ENCODE measurements at regions of chr6 and their contacts with region 1.

Region 1: DNA sequence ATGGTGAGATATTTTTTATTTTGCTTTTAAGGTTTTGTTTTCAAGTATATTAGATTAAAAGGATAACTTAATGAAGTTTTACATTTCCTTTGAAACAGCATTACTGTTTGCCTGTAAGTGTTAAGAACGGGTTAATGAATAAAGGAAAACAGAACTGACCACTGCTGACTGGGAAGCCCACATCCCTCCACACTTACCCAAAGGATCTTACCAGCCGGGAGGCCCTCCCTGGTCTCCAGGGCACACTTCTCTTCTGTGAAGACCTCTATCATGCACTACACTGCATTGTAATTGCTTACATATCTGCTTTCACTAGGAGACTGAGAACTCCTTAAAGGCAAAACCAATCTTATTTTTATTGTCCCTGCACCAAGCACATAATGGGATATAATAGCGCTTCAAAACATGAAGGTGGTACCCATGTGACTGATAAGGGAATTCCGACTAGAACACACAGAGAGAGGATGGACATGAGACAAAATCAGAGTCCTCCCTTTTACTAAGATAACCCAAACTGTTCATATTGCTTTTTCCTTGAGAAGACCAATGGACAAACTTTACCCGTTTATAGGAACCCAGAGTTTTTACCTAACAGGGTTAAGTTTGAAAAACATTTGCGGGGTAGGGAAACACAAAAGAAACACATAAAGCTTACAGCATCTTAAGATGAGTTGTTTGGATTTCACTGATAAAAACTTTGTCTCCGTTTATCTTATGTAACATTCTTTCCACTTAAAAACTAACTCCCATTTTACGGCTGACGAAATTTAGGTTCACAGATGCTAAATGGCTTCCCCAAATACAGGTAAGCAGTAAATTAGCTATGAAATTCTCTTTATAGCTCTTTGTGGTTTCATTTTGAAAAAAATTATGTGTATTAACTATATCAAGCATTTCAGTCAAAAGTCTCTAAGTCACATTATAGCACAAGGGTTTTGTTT is 8.7 kb downstream of the EZR start:
- DNase-seq: no peak
- H3K4me3 ChIP-seq: no peak overlapping the region
- H3K27ac ChIP-seq: no peak overlapping the region
- H3K4me1 ChIP-seq: no peaks in the 10 kb centered on the region
- H3K27me3 ChIP-seq: no peaks in the 10 kb centered on the region
- CTCF ChIP-seq: no peak
- POLR2A ChIP-seq: no peak

Region 2: DNA sequence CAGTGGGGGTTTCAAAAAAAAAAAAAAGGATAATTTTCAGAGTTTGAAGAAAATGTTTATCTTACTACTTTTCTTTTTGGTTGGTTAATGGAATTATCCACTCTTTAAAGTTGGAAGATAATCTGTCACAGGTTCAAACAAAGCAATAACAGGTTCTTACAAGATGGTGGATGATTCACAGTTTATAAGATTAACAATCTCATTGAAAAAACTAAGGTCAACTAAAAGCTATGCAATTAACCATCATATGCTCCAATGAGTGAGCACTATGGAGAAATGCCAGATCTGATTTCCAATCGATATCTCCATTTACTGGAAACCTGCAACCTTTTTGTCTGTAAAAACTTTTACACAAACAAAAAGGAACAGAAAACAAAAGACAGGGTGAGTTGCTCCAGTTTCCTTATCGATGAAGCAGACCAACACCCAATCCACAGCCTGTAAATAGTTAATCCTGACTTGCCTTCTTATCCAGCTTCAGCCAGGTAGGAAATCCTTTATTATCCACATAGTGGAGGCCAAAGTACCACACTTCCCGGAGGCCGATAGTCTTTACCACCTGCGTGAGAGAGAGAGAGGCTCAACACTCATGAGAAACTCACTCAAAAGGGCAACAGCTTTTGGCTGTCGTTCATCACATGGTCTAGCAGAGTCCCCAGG is 23.6 kb before region 1 on chr6:
- intact Hi-C with region 1: loop called (anchors 2 kb)
- DNase-seq: no peak
- H3K4me3 ChIP-seq: no peak overlapping the region
- H3K27ac ChIP-seq: no peak overlapping the region
- H3K4me1 ChIP-seq: no peaks in the 10 kb centered on the region
- H3K27me3 ChIP-seq: no peaks in the 10 kb centered on the region
- CTCF ChIP-seq: no peak
- POLR2A ChIP-seq: no peak

Measured in breast epithelium (tissue), 4 donors.